IMR-90 (cell line): ENCODE measurements at regions of chr21 and their contacts with region 1.

Region 1: DNA sequence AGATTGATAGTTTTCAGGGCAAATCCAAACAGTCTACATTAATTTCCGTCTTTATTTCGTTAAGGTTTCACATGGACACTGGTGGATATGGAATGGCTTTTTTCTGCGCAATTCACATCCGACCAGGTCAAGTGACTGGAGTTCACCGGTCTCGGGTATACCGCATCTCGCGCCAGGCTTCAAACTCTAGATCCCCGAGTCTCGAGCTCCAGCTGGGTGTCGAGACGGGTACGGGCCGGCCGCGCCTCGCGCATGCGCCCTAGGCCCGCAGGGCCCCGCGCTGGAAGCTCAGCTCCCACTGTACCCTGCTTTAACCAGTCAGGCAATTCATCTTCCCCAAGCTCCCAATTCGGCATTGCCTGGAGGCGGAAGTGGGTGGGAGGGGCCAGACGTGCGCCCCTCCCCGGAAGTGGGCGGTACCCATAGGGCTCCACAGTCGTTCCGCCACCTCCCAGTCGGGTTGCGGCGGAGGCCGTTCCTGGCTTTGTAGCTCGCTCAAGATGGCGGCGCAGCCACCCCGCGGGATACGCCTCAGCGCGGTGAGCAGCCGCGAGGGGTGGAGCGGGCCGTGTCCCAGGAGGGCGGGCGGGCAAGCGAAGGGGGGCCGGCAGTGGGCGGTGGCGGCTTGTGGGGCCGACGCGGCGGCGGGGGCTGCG is at the start of gene MORC3:
- DNase-seq: peak; percentile 99
- ATAC-seq: peak; percentile 94
- H3K4me3 ChIP-seq: peak within 1 kb of the TSS; percentile 81
- H3K27ac ChIP-seq: peak within 1 kb of the TSS; percentile 83
- H3K4me1 ChIP-seq: peaks cover 5% of the 10 kb centered on the region
- H3K27me3 ChIP-seq: no peaks in the 10 kb centered on the region
- CTCF ChIP-seq: no peak
- POLR2A ChIP-seq: peak; percentile 90
- RAD21 ChIP-seq: no peak
- total RNA-seq, gene MORC3: 23.5 and 39.4 TPM in 2 replicates

Region 2: GRCh38 chr21:36060159-36060921 is 259.6 kb before region 1 on chr21 and contains the start of gene SETD4:
- CTCF ChIA-PET with region 1: no interaction called
- POLR2A ChIA-PET with region 1: no interaction called
- dilution Hi-C with region 1: no loop called
- in situ Hi-C with region 1: no loop called
- intact Hi-C with region 1: loop called (anchors 5 kb)
- DNase-seq: peak; percentile 92
- ATAC-seq: peak; percentile 94
- H3K4me3 ChIP-seq: peak within 1 kb of the TSS; percentile 86
- H3K27ac ChIP-seq: peak within 1 kb of the TSS; percentile 70
- H3K4me1 ChIP-seq: no peaks in the 10 kb centered on the region
- H3K27me3 ChIP-seq: no peaks in the 10 kb centered on the region
- CTCF ChIP-seq: no peak
- POLR2A ChIP-seq: peak; percentile 48; the same call in 1 of the 2 replicates
- RAD21 ChIP-seq: no peak
- total RNA-seq, gene SETD4: 7.5 and 9.5 TPM in 2 replicates

Region 3: GRCh38 chr21:36132696-36133095 is 187.2 kb before region 1 on chr21:
- CTCF ChIA-PET with region 1: no interaction called
- POLR2A ChIA-PET with region 1: interaction called, 12 read pairs
- dilution Hi-C with region 1: no loop called
- in situ Hi-C with region 1: no loop called
- intact Hi-C with region 1: no loop called
- DNase-seq: no peak
- ATAC-seq: no peak
- H3K4me3 ChIP-seq: no peak overlapping the region
- H3K27ac ChIP-seq: no peak overlapping the region
- H3K4me1 ChIP-seq: peaks cover 10% of the 10 kb centered on the region
- H3K27me3 ChIP-seq: no peaks in the 10 kb centered on the region
- CTCF ChIP-seq: no peak
- POLR2A ChIP-seq: no peak
- RAD21 ChIP-seq: no peak

Region 4: DNA sequence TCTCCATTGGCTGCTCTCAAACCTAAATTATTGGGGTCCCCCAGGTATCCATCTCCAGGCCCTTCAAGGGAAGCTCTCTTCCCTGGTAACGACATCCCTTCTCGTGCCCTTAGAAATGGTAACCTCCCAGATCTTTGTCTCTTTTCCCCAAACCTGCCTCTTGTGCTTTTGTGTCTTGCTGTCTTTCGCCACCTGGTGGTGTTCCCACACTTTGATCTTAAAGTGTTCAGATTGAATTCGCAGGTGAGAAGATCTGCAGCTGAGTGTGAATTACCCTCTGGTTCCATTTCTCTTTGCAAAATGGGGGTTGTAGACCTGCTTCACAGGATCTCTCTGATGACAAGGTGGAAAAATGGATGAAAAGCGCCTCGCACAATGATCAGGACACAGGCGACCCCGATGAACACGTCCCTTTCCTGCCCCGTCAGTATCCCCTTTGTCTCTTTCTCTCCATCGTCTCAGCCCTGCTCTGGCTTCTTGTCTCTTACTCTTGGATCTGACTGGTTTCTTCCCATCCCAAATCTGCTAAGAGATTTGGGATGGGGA is 110.2 kb before region 1 on chr21:
- CTCF ChIA-PET with region 1: no interaction called
- POLR2A ChIA-PET with region 1: interaction called, 3 read pairs
- dilution Hi-C with region 1: no loop called
- in situ Hi-C with region 1: no loop called
- intact Hi-C with region 1: loop called (anchors 5 kb)
- DNase-seq: peak; percentile 82
- ATAC-seq: peak; percentile 18; the same call in 1 of the 2 replicates
- H3K4me3 ChIP-seq: no peak overlapping the region
- H3K27ac ChIP-seq: peak overlapping the region; percentile 51
- H3K4me1 ChIP-seq: peaks cover 26% of the 10 kb centered on the region
- H3K27me3 ChIP-seq: no peaks in the 10 kb centered on the region
- CTCF ChIP-seq: peak; percentile 57
- POLR2A ChIP-seq: no peak
- RAD21 ChIP-seq: peak; percentile 64

Region 5: DNA sequence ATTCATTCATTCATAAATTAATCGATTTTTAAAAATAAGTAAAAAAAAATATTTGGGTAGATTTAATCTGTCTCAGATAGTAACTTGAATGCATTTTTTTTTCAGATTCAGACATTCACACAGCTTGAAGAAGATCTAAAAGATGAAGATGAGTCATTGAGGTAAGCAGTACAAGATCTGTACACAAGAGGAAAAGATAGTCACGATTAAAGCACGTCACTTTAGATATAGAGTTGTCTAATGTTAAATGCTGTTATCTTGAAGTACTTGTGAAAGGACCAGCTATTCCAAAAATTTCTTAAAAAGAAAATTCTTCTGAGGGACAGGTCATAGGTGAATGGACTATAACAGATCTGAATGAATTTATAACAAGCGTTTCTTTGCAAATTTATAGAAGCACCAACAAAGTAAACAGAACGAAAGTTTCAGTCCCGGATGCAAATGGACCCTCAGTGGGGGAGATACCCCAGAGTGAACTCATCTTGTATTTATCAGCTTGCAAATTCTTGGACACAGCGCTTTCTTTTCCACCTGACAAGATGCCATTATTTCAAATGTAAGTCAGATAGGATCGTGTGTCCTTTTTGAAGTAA is 31.1 kb before region 1 on chr21:
- CTCF ChIA-PET with region 1: interaction called, 3 read pairs
- POLR2A ChIA-PET with region 1: interaction called, 8 read pairs
- dilution Hi-C with region 1: no loop called
- in situ Hi-C with region 1: no loop called
- intact Hi-C with region 1: loop called (anchors 2 kb)
- DNase-seq: peak; percentile 51
- ATAC-seq: peak; percentile 6; the same call in 1 of the 2 replicates
- H3K4me3 ChIP-seq: peak overlapping the region; percentile 18; the same call in 1 of the 2 replicates
- H3K27ac ChIP-seq: peak overlapping the region; percentile 64; the same call in 1 of the 2 replicates
- H3K4me1 ChIP-seq: peaks cover 3% of the 10 kb centered on the region
- H3K27me3 ChIP-seq: no peaks in the 10 kb centered on the region
- CTCF ChIP-seq: no peak
- POLR2A ChIP-seq: no peak
- RAD21 ChIP-seq: no peak

Region 6: DNA sequence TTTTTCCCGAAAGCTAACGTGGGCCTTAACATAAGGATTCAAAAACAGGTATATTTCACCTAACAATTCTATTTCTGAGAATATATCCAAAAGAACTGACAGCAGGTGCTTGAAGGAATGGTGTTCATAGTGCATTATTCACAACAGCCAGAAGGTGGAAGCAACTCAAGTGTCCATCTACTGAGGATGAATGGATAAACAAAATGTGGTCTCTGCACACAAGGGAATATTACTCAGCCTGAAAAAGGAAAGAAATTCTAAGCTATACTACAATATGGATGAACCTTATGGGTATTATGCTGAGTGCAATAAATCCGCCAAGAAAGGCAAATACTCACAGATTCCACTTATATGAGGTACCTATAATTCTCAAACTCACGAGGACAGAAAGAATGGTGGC is 680.5 kb after region 1 on chr21:
- CTCF ChIA-PET with region 1: no interaction called
- POLR2A ChIA-PET with region 1: no interaction called
- dilution Hi-C with region 1: no loop called
- in situ Hi-C with region 1: no loop called
- intact Hi-C with region 1: no loop called
- DNase-seq: no peak
- ATAC-seq: no peak
- H3K4me3 ChIP-seq: no peak overlapping the region
- H3K27ac ChIP-seq: no peak overlapping the region
- H3K4me1 ChIP-seq: no peaks in the 10 kb centered on the region
- H3K27me3 ChIP-seq: peaks cover 19% of the 10 kb centered on the region
- CTCF ChIP-seq: no peak
- POLR2A ChIP-seq: no peak
- RAD21 ChIP-seq: no peak

Region 7: DNA sequence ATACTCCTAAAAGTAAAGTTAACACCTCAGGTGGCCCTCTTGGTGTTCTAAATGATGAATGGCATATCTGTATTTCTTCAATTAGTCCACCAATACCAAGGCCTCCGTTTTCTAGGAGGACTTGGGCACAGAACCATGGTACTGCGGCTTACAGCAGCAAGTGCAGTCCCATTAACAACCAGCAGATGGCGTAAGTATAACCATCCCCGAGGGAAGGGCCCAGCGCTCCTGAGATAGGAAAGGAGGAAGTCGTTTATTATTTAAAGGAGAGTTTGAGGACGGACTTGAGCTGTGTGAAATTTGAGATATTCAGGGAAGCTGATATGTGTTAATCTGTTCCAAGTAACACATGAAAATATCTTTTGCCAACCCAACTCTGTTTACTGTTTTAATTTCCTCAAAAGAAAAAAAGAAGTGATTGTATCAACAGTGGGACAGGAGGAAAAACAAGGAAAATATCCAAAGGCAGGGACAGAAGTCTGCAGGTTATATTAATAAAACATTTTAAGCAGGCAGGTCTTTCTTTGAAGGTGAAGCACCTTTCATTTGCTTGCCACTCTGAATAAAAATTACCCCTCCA is 1899.2 kb after region 1 on chr21:
- CTCF ChIA-PET with region 1: no interaction called
- POLR2A ChIA-PET with region 1: no interaction called
- dilution Hi-C with region 1: no loop called
- in situ Hi-C with region 1: no loop called
- intact Hi-C with region 1: no loop called
- DNase-seq: peak; percentile 79
- ATAC-seq: peak; percentile 98
- H3K4me3 ChIP-seq: no peak overlapping the region
- H3K27ac ChIP-seq: no peak overlapping the region
- H3K4me1 ChIP-seq: no peaks in the 10 kb centered on the region
- H3K27me3 ChIP-seq: no peaks in the 10 kb centered on the region
- CTCF ChIP-seq: peak; percentile 91
- POLR2A ChIP-seq: no peak
- RAD21 ChIP-seq: peak; percentile 95